Activated B cell treated with CpG ODN at 0.5 μM for 24 hours (primary cell): ENCODE measurements at regions of chr9 and their contacts with region 1.

Region 1: DNA sequence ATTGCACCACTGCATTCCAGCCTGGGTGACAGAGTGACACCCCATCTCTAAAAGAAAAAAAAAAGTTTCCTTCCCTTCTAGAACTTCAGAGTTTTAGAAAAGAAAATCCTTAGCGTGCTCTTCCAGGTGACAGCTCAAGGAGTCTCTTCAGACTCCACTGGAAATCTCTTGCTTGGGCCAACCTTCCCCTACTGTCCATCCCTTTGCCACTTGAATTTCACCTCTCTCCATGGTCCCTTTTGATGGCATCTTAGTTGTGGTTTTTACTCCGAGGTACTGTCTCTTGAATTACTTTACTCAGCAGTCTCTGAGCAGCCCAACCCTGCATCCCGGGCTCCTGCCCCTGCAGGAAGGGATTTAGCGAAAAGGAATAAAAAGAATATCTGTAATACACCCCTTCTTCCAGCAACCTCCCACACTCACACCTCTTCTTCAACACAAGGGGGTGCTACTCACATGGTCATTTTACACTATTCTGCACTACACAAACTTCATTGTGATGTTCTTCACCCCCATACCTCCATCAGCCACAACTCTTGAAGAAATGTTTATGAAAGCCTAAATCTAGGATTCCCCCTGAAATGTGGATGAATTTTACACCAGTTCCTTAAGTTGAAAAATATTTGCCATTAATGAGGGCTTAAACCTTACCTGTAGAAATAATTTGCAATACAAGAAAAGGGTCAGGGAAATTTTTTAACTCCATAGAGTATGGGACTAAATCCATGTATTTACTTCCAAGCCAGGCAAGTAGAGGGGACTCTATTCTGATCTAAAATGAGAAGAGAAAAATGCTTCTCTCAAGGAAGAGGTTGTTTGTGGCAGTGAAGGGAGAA is 25.9 kb downstream of the TPD52L3 start:
- DNase-seq: no peak
- ATAC-seq: peak; percentile 91
- H3K4me3 Mint-ChIP-seq: no peak overlapping the region
- H3K27ac Mint-ChIP-seq: no peak overlapping the region
- H3K4me1 Mint-ChIP-seq: peaks cover 12% of the 10 kb centered on the region
- H3K27me3 Mint-ChIP-seq: peaks cover 4% of the 10 kb centered on the region
- CTCF ChIP-seq: peak; percentile 85

Region 2: DNA sequence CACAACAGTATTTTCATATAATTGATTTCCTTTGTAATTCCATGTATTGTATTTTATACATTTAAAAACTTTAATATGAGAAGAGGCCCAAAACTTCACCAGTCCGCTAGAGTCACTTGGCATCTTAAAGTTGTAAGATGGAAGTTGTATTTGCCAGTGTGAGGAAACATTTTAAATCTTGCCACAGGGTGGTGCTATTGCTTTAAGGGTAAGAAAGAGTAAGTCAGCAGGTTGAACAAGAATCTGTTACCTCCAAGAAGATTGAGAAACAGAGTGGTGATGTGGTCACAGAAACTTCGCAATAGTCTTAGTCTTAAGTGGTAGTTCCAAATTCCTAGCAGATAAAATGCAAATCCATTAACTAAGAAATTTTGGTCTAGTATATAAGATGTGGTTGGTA is 298.9 kb before region 1 on chr9:
- CTCF ChIA-PET with region 1: interaction called, 3 read pairs
- POLR2A ChIA-PET with region 1: no interaction called
- intact Hi-C with region 1: loop called (anchors 5 kb)
- DNase-seq: no peak
- ATAC-seq: peak; percentile 23
- H3K4me3 Mint-ChIP-seq: no peak overlapping the region
- H3K27ac Mint-ChIP-seq: no peak overlapping the region
- H3K4me1 Mint-ChIP-seq: peaks cover 19% of the 10 kb centered on the region
- H3K27me3 Mint-ChIP-seq: peaks cover 3% of the 10 kb centered on the region
- CTCF ChIP-seq: no peak

Region 3: GRCh38 chr9:6498982-6499381 is 144.9 kb after region 1 on chr9:
- CTCF ChIA-PET with region 1: interaction called, 3 read pairs
- POLR2A ChIA-PET with region 1: no interaction called
- intact Hi-C with region 1: loop called (anchors 2 kb)
- DNase-seq: no peak
- ATAC-seq: peak; percentile 37
- H3K4me3 Mint-ChIP-seq: no peak overlapping the region
- H3K27ac Mint-ChIP-seq: no peak overlapping the region
- H3K4me1 Mint-ChIP-seq: no peaks in the 10 kb centered on the region
- H3K27me3 Mint-ChIP-seq: no peaks in the 10 kb centered on the region
- CTCF ChIP-seq: no peak

Region 4: GRCh38 chr9:6667633-6668280 is 313.7 kb after region 1 on chr9:
- CTCF ChIA-PET with region 1: interaction called, 8 read pairs
- POLR2A ChIA-PET with region 1: no interaction called
- intact Hi-C with region 1: loop called (anchors 1 kb)
- DNase-seq: no peak
- ATAC-seq: peak; percentile 50
- H3K4me3 Mint-ChIP-seq: no peak overlapping the region
- H3K27ac Mint-ChIP-seq: no peak overlapping the region
- H3K4me1 Mint-ChIP-seq: peaks cover 7% of the 10 kb centered on the region
- H3K27me3 Mint-ChIP-seq: no peaks in the 10 kb centered on the region
- CTCF ChIP-seq: no peak

Region 5: DNA sequence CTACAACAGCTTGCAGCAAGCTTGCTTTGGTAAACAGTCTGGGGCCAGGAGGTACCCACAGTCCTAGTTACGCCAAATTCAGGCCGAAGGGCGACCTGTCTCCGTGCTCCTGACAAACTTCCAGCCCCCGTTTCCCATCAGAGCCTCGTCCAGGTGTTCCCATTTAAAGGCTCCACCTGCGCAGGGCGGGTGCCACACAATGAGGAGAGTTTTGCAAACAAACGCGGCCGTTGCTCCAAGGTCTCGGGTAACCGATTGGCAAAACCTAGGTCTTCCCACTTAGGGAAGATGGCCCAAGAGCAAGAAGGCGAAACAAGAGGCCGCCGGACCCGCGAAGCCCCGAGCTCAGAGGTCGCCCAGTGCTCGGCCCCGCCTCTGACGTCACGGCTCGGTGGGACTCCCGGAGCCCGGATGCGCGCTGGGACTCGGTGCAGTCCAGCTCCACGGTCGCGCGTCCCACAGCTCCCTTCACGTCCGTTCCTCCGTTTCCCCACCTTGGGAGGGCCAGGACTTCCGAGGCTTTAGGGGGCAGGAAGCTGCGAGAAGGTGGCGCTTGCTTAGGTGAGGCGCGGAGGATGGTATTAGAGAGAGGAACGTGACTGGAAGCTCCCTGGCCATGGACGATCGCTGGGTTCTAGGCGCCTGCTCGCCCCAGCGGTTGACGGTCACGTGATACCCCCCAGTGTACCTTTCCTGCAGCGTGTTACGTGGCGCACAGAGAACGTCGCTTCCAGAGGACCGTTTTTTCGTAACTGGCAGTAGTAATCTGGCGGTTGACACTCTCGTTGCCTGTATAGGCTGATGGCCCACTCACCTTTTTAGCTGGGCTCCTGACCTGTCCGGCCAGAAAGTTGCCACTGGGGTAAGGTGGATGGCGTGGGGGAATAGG is 361.9 kb after region 1 on chr9:
- CTCF ChIA-PET with region 1: no interaction called
- POLR2A ChIA-PET with region 1: no interaction called
- intact Hi-C with region 1: no loop called
- DNase-seq: peak; percentile 71
- ATAC-seq: peak; percentile 86
- H3K4me3 Mint-ChIP-seq: peak overlapping the region; percentile 90
- H3K27ac Mint-ChIP-seq: peak overlapping the region; percentile 92
- H3K4me1 Mint-ChIP-seq: peaks cover 13% of the 10 kb centered on the region
- H3K27me3 Mint-ChIP-seq: no peaks in the 10 kb centered on the region
- CTCF ChIP-seq: no peak

Region 6: GRCh38 chr9:6739218-6739617 is 385.1 kb after region 1 on chr9:
- CTCF ChIA-PET with region 1: no interaction called
- POLR2A ChIA-PET with region 1: no interaction called
- intact Hi-C with region 1: loop called (anchors 1 kb)
- DNase-seq: no peak
- ATAC-seq: no peak
- H3K4me3 Mint-ChIP-seq: no peak overlapping the region
- H3K27ac Mint-ChIP-seq: no peak overlapping the region
- H3K4me1 Mint-ChIP-seq: peaks cover 13% of the 10 kb centered on the region
- H3K27me3 Mint-ChIP-seq: no peaks in the 10 kb centered on the region
- CTCF ChIP-seq: no peak